Sigmoid colon (tissue), 7 donors: ENCODE measurements at regions of chr12 and their contacts with region 1.

Region 1: DNA sequence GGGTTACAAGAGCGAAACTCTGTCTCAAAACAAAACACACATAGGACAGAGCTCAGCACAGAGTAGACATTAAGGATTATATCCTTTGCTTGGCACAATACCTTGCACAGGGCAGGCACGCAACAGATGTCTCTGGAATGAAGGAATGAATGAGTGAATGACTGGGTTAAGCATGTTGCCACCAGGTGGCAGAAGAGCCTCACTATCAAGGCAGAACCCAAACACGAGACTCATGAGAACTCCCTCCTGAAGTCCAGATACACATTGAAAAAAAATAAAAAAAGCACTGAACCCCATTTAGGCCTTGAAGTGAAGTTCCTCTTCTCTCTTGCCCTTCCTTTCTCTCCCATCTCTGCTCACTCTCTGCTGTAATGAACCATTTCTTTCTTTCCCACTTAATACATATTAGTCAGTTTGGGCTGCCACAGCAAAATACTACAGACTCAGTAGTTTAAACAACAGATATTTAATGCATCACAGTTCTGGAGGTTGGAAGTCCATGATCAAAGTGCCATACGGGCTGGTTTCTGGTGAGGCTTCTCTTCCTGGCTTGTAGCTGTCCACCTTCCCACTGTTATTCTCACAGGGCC is 26.6 kb upstream of the LTA4H start:
- DNase-seq: peak; percentile 81
- H3K4me3 ChIP-seq: no peak overlapping the region
- H3K27ac ChIP-seq: no peak overlapping the region
- H3K4me1 ChIP-seq: no peaks in the 10 kb centered on the region
- H3K27me3 ChIP-seq: no peaks in the 10 kb centered on the region
- CTCF ChIP-seq: peak; percentile 83 to 93 (median 86)
- EP300 ChIP-seq: no peak
- POLR2A ChIP-seq: no peak

Region 2: DNA sequence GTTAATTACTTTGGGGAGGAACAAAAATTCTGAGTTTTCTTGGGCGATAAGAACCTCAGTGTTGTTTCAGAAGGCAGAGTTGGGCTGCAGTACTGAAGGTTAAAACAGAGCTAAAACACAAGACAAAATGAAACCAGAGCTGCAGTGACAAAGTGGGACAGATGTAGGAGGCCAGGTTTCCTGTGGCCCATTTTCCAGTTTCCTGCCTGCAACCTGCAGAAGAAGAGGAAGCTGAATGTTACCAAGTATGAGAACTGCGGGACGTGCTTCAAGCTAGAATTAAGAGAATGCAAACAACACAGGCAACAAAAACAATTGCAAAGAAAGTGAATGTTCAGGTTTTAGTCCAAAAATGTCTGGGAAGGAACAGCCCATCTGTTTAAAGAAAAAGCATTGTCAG is 150.0 kb after region 1 on chr12:
- intact Hi-C with region 1: loop called (anchors 1 kb)
- DNase-seq: no peak
- H3K4me3 ChIP-seq: no peak overlapping the region
- H3K27ac ChIP-seq: peak overlapping the region in 3 of 4 donors; percentile 47 to 55 (median 51)
- H3K4me1 ChIP-seq: peaks cover 0 to 46% (median 33%) of the 10 kb centered on the region in 4 donors
- H3K27me3 ChIP-seq: no peaks in the 10 kb centered on the region
- CTCF ChIP-seq: no peak
- EP300 ChIP-seq: no peak
- POLR2A ChIP-seq: no peak

Region 3: DNA sequence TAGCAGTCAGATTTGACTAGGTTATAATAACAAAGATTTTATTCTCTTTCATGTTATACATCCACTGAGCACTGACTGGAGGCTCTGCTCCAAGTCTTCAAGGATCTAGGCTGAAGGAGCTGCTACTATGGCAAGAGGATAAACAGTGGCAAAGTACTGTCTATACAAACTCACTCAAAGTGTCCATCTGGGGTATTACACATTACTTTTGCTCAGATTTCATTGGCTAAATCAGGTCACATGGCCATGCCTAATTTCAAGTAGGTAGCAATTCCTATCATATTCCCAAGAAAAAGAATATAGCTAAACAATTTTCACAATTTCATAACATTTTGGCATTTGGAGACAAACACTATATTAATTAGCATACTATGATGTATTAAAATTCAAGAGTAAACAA is 297.4 kb after region 1 on chr12:
- intact Hi-C with region 1: no loop called
- DNase-seq: no peak
- H3K4me3 ChIP-seq: no peak overlapping the region
- H3K27ac ChIP-seq: peak overlapping the region in 2 of 4 donors; percentile 20 to 51
- H3K4me1 ChIP-seq: peaks cover 0 to 90% (median 61%) of the 10 kb centered on the region in 4 donors
- H3K27me3 ChIP-seq: no peaks in the 10 kb centered on the region
- CTCF ChIP-seq: no peak
- EP300 ChIP-seq: no peak
- POLR2A ChIP-seq: no peak

Region 4: GRCh38 chr12:96489103-96490056 is 427.4 kb after region 1 on chr12 and contains the start of gene CFAP54:
- intact Hi-C with region 1: loop called (anchors 5 kb)
- DNase-seq: peak; percentile 97
- H3K4me3 ChIP-seq: peak within 1 kb of the TSS; percentile 62 to 76 (median 66)
- H3K27ac ChIP-seq: peak within 1 kb of the TSS; percentile 71 to 88 (median 75)
- H3K4me1 ChIP-seq: peaks cover 0 to 10% (median 4%) of the 10 kb centered on the region in 4 donors
- H3K27me3 ChIP-seq: no peaks in the 10 kb centered on the region
- CTCF ChIP-seq: peak; percentile 67 to 86 (median 79)
- EP300 ChIP-seq: peak in 2 of 4 donors; percentile 54 to 73
- POLR2A ChIP-seq: no peak
- total RNA-seq, gene CFAP54: 1.1 to 10.5 (median 4.1) TPM

Region 5: DNA sequence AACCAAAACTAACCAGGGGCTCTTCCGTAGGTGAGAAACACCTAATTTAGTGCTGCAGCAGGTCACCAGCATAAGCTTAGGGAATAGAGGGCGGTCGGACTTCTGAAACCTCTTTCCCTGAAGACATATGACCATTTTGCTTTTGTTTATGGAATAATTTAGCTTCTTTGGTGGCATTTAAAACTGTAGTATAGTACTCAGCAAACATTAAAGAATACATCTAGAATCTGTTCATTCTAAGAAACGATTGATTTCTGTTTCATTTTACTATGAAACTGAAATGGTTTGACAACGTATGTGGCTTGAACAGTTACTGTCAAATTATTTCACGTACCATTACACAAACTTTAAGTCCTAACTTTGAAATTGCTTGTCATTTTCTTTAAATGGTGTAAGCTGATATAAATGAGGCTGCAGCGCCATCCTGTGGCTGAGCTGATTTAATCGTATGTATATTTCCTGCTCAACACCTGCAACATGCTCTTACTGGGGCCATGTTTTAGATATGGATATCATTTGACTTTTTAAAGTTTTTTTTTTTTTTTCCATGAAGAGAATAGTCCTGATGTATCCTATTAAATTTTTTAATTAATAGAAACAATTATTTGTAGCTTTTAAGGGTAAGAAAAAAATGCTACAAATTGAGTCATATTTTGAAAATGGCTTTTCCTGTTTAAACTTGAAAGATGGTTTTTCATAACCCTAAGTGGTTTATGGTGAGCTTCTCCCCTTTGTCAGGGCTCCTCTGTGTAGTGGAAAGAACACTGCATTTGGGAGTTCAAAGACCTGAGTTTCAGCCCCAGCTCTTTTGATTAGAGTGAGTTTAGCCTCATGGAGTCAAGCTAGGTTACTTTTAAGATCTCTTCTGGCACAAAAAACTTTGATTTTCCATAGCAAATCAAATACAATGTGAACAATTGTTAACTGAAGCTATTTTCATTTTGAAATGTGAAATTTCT is 454.8 kb after region 1 on chr12:
- intact Hi-C with region 1: loop called (anchors 1 kb)
- DNase-seq: peak; percentile 84
- H3K4me3 ChIP-seq: no peak overlapping the region
- H3K27ac ChIP-seq: no peak overlapping the region
- H3K4me1 ChIP-seq: peaks cover 0 to 22% (median 9%) of the 10 kb centered on the region in 4 donors
- H3K27me3 ChIP-seq: no peaks in the 10 kb centered on the region
- CTCF ChIP-seq: peak; percentile 46 to 79 (median 61)
- EP300 ChIP-seq: no peak
- POLR2A ChIP-seq: no peak